GM10248 (cell line): ENCODE measurements at regions of chr1 and their contacts with region 1.

Region 1: GRCh38 chr1:226608699-226609505 is 60.3 kb downstream of the STUM start:
- DNase-seq: peak; percentile 85
- CTCF ChIP-seq: peak; percentile 87

Region 2: DNA sequence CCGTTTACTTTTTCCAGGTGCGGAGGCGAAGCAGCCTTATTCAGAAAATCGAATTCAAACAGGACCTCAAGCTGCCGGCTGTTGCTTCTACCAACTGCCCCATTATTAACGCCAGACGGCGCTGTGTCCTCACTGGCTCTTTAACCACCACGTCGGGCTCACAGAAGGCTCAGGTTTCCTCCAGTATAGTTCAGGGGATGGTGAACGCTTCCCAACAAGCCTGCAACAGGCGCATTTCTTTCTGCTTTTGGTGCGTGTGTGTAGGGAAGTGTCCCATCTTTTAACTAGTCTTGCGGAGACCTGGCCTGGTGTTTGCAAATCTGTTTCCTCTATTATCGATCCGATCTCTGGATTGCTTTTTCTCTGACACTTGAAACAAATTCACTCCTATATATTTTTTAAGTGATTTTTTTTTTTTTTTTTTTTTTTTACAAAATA is 61.1 kb before region 1 on chr1:
- CTCF ChIA-PET with region 1: interaction called, 10 read pairs
- POLR2A ChIA-PET with region 1: no interaction called
- DNase-seq: peak; percentile 85
- CTCF ChIP-seq: peak; percentile 89

Region 3: GRCh38 chr1:226581645-226582330 is 27.1 kb before region 1 on chr1:
- CTCF ChIA-PET with region 1: interaction called, 22 read pairs
- POLR2A ChIA-PET with region 1: no interaction called
- DNase-seq: no peak
- CTCF ChIP-seq: no peak

Region 4: GRCh38 chr1:226589008-226589733 is 19.7 kb before region 1 on chr1:
- CTCF ChIA-PET with region 1: interaction called, 22 read pairs
- POLR2A ChIA-PET with region 1: no interaction called
- DNase-seq: no peak
- CTCF ChIP-seq: no peak

Region 5: DNA sequence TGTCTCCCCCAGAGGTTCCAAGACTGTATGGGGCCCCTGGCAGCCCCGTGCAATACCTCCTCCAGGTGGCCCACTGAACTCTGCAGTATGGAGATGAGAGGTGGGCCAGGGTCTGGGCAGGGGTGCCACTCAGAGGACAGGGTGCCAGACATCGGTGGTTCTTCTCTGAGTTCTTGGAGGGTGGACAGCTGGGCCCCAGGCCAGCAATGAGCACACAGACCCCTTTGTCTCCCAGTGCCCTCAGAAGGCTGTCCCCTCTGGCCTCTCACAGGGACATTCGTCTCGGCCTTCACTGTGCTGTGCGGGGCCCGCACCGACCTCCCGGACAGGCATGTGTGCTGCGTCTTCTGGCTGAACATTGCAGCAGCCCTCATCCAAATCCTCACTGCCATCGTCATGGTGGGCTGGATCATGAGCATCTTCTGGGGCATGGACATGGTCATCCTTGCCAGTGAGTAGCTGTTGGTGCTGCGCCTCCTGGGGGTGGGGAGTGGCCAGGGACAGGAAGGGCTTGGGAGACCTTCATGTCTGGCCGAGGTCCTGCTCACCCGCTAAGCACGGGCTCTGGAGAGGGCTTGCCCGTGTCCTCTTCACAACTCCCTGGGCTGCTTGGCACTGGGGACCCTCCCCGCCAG is 12.3 kb before region 1 on chr1:
- CTCF ChIA-PET with region 1: interaction called, 13 read pairs
- POLR2A ChIA-PET with region 1: no interaction called
- DNase-seq: no peak
- CTCF ChIP-seq: no peak

Region 6: GRCh38 chr1:226754793-226755533 is 146.1 kb after region 1 on chr1:
- CTCF ChIA-PET with region 1: no interaction called
- POLR2A ChIA-PET with region 1: no interaction called
- DNase-seq: no peak
- CTCF ChIP-seq: no peak

Region 7: DNA sequence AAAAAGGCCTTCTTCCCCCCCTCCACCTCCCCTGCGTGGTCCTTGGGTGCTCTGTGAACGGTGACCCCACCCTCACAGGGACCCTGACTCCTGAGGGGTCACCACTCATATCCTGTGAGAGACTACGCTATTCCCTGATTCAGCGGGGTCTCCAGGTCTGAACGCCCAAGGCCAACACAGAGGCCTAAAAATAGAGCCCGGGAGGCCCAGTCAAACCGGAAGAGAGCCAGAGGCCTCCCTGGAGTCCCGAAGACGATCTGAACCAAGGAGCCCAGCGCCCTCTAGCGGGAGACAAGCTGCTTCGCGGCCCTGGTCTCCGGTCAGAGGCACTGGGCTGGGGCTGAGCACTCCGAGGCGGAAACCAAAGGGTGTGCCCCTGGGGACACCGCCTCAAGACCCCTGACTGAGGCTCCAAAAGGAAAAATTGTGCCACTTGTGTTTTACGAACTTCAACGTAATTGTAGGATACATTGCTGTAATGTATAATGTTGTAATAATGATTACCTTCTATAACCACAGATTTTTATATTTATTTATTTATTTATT is 219.1 kb after region 1 on chr1:
- CTCF ChIA-PET with region 1: interaction called, 10 read pairs
- POLR2A ChIA-PET with region 1: no interaction called
- DNase-seq: peak; percentile 94
- CTCF ChIP-seq: peak; percentile 98